MCF 10A (cell line): ENCODE measurements at regions of chr18 and their contacts with region 1.

Region 1: GRCh38 chr18:51135795-51136194 is 61.7 kb downstream of the MEX3C start:
- DNase-seq: peak; percentile 48
- H3K4me3 Mint-ChIP-seq: peak overlapping the region; percentile 85
- H3K27ac Mint-ChIP-seq: peak overlapping the region; percentile 97
- H3K4me1 Mint-ChIP-seq: peaks cover 45% of the 10 kb centered on the region
- H3K27me3 Mint-ChIP-seq: no peaks in the 10 kb centered on the region
- CTCF ChIP-seq: no peak

Region 2: DNA sequence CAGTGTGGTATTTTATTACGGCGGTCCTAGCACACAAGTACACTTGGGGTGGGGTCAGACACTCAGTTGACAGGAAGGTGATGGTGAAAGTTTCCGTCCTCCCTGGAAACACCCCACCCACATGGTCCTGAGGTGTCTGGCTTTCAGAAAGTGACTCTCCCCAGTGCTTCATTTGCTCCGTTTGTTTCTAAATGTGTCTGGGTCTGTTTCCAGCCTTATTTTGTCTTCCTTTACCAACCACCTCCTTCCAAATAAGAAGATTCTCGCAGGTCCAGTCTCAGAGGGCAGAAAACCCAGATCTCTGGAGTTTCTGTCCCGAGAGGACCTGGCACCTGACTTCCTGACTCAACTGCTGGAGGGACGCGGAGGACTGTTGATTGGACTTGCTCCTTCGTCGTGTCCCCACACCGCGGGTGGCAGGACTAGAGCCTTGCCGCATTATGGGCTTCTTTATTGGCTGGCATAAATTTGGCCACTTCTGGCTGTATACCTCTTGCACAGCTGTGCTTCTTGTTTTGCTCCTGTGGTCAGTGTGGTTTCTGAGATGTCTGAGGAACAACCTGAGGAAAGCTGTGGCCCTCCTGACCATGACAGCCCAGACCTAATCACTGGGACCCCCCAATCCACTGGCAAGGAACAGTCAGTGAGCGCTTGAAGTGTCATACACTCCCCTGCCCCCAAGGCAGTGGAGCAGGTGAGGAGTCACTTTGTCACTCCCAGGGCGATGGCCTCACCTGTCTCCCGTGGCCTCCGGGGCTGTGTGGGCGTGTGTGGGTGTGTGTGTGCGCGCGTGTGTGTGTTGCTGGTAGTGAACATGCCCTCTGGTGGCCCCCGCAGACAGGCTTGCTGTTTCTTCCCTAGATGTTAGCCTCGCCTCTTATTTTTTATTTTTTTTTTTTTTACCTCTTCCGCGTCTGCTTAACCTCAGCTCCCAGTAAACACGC is 16.0 kb after region 1 on chr18:
- CTCF ChIA-PET with region 1: interaction called, 6 read pairs
- POLR2A ChIA-PET with region 1: interaction called, 14 read pairs
- intact Hi-C with region 1: loop called (anchors 2 kb)
- DNase-seq: no peak
- H3K4me3 Mint-ChIP-seq: no peak overlapping the region
- H3K27ac Mint-ChIP-seq: no peak overlapping the region
- H3K4me1 Mint-ChIP-seq: peaks cover 10% of the 10 kb centered on the region
- H3K27me3 Mint-ChIP-seq: no peaks in the 10 kb centered on the region
- CTCF ChIP-seq: no peak

Region 3: GRCh38 chr18:51266773-51267172 is 131.0 kb after region 1 on chr18:
- CTCF ChIA-PET with region 1: interaction called, 4 read pairs
- POLR2A ChIA-PET with region 1: interaction called, 4 read pairs
- intact Hi-C with region 1: loop called (anchors 2 kb)
- DNase-seq: peak; percentile 80
- H3K4me3 Mint-ChIP-seq: no peak overlapping the region
- H3K27ac Mint-ChIP-seq: no peak overlapping the region
- H3K4me1 Mint-ChIP-seq: peaks cover 11% of the 10 kb centered on the region
- H3K27me3 Mint-ChIP-seq: no peaks in the 10 kb centered on the region
- CTCF ChIP-seq: no peak